Tibial artery (tissue), 4 donors: ENCODE measurements at regions of chr13 and their contacts with region 1.

Region 1: GRCh38 chr13:39016787-39017186 is 21.1 kb downstream of the PROSER1 start:
- DNase-seq: no peak
- H3K4me3 ChIP-seq: no peak overlapping the region
- H3K27ac ChIP-seq: no peak overlapping the region
- H3K4me1 ChIP-seq: no peaks in the 10 kb centered on the region
- H3K27me3 ChIP-seq: no peaks in the 10 kb centered on the region
- CTCF ChIP-seq: no peak

Region 2: GRCh38 chr13:37029617-37030016 is 1987.2 kb before region 1 on chr13:
- intact Hi-C with region 1: loop called (anchors 5 kb)
- DNase-seq: no peak
- H3K4me3 ChIP-seq: no peak overlapping the region
- H3K27ac ChIP-seq: no peak overlapping the region
- H3K4me1 ChIP-seq: no peaks in the 10 kb centered on the region
- H3K27me3 ChIP-seq: no peaks in the 10 kb centered on the region
- CTCF ChIP-seq: no peak

Region 3: DNA sequence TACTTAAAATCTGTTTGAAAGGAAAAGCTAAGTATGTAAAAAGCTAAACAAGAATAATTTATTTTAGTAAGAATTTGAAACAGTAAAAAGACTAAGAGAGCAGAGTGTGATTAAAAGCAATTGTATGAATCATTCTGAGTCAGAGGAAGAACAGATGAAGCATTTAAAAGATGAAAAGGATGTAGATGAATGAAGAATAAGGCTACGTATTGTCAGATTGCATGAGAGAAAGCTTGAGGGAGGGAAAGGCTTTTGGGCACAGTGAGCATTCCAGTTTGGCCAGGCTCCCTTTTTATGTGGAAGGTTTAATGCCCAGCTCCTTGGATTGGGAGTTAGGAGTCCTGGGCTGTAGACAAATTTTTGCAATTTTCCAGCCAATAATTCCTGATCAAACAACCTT is 212.3 kb before region 1 on chr13:
- intact Hi-C with region 1: no loop called
- DNase-seq: no peak
- H3K4me3 ChIP-seq: no peak overlapping the region
- H3K27ac ChIP-seq: no peak overlapping the region
- H3K4me1 ChIP-seq: no peaks in the 10 kb centered on the region
- H3K27me3 ChIP-seq: no peaks in the 10 kb centered on the region
- CTCF ChIP-seq: no peak